ENCODE measurements at regions of chr9 and their contacts with region 1.

Region 1: GRCh38 chr9:37903647-37904444 is at the start of gene SLC25A51:
- DNase-seq: peak; percentile 94 to 99 (median 96)
- ATAC-seq: peak; percentile 87
- H3K4me3 ChIP-seq: peak within 1 kb of the TSS; percentile 65 to 89
- H3K4me3 Mint-ChIP-seq: peak within 1 kb of the TSS; percentile 91
- H3K27ac ChIP-seq: peak within 1 kb of the TSS; percentile 62 to 73
- H3K27ac Mint-ChIP-seq: peak within 1 kb of the TSS; percentile 94
- H3K4me1 ChIP-seq: peaks cover 22% of the 10 kb centered on the region
- H3K4me1 Mint-ChIP-seq: peaks cover 30% of the 10 kb centered on the region
- H3K27me3 ChIP-seq: no peaks in the 10 kb centered on the region
- H3K27me3 Mint-ChIP-seq: no peaks in the 10 kb centered on the region
- CTCF ChIP-seq: peak; percentile 86
- total RNA-seq, gene SLC25A51: 14.7 to 15.2 TPM

Region 2: GRCh38 chr9:37784616-37785483 is 119.0 kb before region 1 on chr9 and contains the start of gene EXOSC3:
- CTCF ChIA-PET with region 1: no interaction called
- POLR2A ChIA-PET with region 1: no interaction called
- intact Hi-C with region 1: loop called (anchors 1 to 5 kb)
- DNase-seq: peak; percentile 58 to 92 (median 84)
- ATAC-seq: peak; percentile 83
- H3K4me3 ChIP-seq: peak within 1 kb of the TSS; percentile 98
- H3K4me3 Mint-ChIP-seq: peak within 1 kb of the TSS; percentile 97
- H3K27ac ChIP-seq: peak within 1 kb of the TSS; percentile 75 to 88
- H3K27ac Mint-ChIP-seq: peak within 1 kb of the TSS; percentile 96
- H3K4me1 ChIP-seq: peaks cover 24% of the 10 kb centered on the region
- H3K4me1 Mint-ChIP-seq: peaks cover 42% of the 10 kb centered on the region
- H3K27me3 ChIP-seq: no peaks in the 10 kb centered on the region
- H3K27me3 Mint-ChIP-seq: peaks cover 4% of the 10 kb centered on the region
- CTCF ChIP-seq: no peak
- total RNA-seq, gene EXOSC3: 34.2 to 45.9 TPM

Region 3: GRCh38 chr9:37820142-37820541 is 83.7 kb before region 1 on chr9:
- CTCF ChIA-PET with region 1: no interaction called
- POLR2A ChIA-PET with region 1: no interaction called
- intact Hi-C with region 1: no loop called
- DNase-seq: no peak
- ATAC-seq: no peak
- H3K4me3 ChIP-seq: no peak overlapping the region
- H3K4me3 Mint-ChIP-seq: no peak overlapping the region
- H3K27ac ChIP-seq: no peak overlapping the region
- H3K27ac Mint-ChIP-seq: no peak overlapping the region
- H3K4me1 ChIP-seq: no peaks in the 10 kb centered on the region
- H3K4me1 Mint-ChIP-seq: peaks cover under 1% of the 10 kb centered on the region
- H3K27me3 ChIP-seq: no peaks in the 10 kb centered on the region
- H3K27me3 Mint-ChIP-seq: no peaks in the 10 kb centered on the region
- CTCF ChIP-seq: no peak

Region 4: DNA sequence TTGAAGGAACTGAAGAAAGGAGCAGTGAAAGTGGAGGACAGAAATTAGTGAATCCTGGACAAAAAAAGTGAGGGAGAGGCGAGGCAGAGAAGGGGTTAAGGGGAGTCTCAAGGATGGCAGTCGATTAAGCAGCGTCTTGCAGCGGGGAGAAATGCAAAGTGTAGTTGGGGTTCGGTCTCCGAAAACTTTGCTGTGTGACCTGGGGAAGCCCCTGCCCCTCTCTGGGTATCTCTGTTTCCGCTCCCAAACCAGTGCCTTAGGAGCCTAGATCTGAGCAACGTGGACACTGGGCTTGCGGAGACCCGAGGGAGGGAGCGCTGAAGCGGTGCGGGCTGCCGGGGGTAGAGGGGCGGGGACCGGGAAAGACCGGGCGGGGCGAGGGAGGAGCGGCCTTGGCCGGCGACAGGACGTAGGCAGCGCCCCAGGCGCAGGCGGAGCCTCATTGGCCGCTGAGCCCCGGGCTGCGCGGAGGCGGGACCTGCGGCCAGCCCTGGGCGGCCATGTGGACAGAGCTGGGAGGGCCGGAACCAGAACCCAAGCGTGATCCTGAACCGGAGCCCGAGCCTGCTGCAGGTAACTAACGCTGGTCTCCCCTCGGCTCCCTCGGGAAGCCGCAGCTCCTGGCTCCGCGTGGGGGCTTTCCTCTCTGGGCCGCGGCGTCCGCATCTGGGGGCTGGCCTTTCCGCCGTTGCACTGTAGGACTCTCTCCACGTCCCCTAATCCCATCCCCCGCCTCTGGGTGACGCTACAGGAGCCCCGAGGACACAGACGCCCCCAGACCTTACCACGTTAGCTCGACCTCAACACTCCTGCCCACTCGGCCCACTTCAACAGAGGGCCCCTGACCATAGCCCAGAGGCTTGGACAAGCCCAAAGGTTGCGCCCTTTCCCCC is 488.6 kb after region 1 on chr9 and contains the start of gene ALDH1B1:
- CTCF ChIA-PET with region 1: no interaction called
- POLR2A ChIA-PET with region 1: no interaction called
- intact Hi-C with region 1: loop called in 1 of 2 experiments (anchors 5 kb)
- DNase-seq: peak; percentile 14 to 81 (median 61)
- ATAC-seq: peak; percentile 93
- H3K4me3 ChIP-seq: peak within 1 kb of the TSS; percentile 63 to 89
- H3K4me3 Mint-ChIP-seq: peak within 1 kb of the TSS; percentile 85
- H3K27ac ChIP-seq: peak within 1 kb of the TSS; percentile 11 to 46
- H3K27ac Mint-ChIP-seq: peak within 1 kb of the TSS; percentile 69
- H3K4me1 ChIP-seq: no peaks in the 10 kb centered on the region
- H3K4me1 Mint-ChIP-seq: peaks cover 17% of the 10 kb centered on the region
- H3K27me3 ChIP-seq: no peaks in the 10 kb centered on the region
- H3K27me3 Mint-ChIP-seq: no peaks in the 10 kb centered on the region
- CTCF ChIP-seq: no peak
- total RNA-seq, gene ALDH1B1: 0.50 to 0.71 TPM

Measured in CD8-positive, alpha-beta T cell (primary cell).